OCI-LY7 (cell line): ENCODE measurements at regions of chr6 and their contacts with region 1.

Region 1: DNA sequence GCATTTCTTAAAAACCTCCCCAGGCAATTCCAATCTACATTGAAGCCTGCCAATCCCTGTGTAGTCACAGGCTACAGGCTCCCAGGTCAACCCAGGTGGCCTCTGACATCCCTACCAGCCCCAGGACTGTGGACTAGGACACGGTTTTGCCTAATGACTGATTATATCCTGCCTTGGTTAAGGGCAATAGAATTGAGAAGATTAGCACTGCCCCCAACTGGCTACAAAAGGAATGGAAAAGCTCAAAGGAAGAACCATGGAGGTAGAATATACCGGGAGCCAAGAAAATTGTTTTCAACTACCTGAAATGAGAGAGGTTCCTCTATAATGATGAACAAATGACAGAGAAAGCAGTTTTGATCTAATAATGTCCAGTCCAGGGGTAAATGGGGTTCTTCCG is 421.1 kb upstream of the AGPAT4 start:
- DNase-seq: peak; percentile 4
- H3K4me3 ChIP-seq: no peak overlapping the region
- H3K27ac ChIP-seq: no peak overlapping the region
- H3K4me1 ChIP-seq: no peaks in the 10 kb centered on the region
- CTCF ChIP-seq: peak; percentile 71

Region 2: DNA sequence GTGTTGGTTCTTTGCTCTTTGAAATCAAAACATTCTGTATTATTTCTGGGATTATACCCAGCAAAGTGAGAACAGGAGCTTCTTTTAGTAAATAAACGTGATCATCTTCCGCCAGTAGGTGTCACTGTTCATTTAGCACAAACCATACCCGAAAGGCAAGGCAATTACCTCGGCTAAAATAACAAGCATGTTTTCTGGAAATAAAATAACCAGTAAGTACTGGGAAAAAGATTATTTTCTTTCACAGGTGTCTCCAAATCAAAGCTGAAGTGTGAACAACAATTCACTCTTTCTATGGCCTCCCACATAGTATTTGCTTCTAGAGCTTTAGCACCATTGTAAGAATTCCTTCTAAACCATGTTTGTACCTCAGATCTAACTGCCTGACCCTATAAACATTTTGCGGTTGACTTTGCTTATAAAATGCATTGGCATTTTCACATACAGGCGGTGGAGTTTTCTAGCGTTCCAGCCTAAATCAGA is 276.5 kb before region 1 on chr6:
- CTCF ChIA-PET with region 1: no interaction called
- POLR2A ChIA-PET with region 1: no interaction called
- intact Hi-C with region 1: loop called (anchors 10 kb)
- DNase-seq: peak; percentile 58
- H3K4me3 ChIP-seq: no peak overlapping the region
- H3K27ac ChIP-seq: no peak overlapping the region
- H3K4me1 ChIP-seq: no peaks in the 10 kb centered on the region
- CTCF ChIP-seq: peak; percentile 91

Region 3: GRCh38 chr6:161444464-161444863 is 250.5 kb before region 1 on chr6:
- CTCF ChIA-PET with region 1: no interaction called
- POLR2A ChIA-PET with region 1: no interaction called
- intact Hi-C with region 1: no loop called
- DNase-seq: no peak
- H3K4me3 ChIP-seq: no peak overlapping the region
- H3K27ac ChIP-seq: no peak overlapping the region
- H3K4me1 ChIP-seq: no peaks in the 10 kb centered on the region
- CTCF ChIP-seq: no peak